CD8-positive, alpha-beta T cell (primary cell): ENCODE measurements at regions of chr20 and their contacts with region 1.

Region 1: GRCh38 chr20:5569021-5569420 is 181.2 kb upstream of the SHLD1 start:
- DNase-seq: peak; percentile 15 to 72 (median 47)
- ATAC-seq: peak; percentile 87
- H3K4me3 ChIP-seq: no peak overlapping the region
- H3K4me3 Mint-ChIP-seq: no peak overlapping the region
- H3K27ac ChIP-seq: no peak overlapping the region
- H3K27ac Mint-ChIP-seq: no peak overlapping the region
- H3K4me1 ChIP-seq: no peaks in the 10 kb centered on the region
- H3K4me1 Mint-ChIP-seq: peaks cover 24% of the 10 kb centered on the region
- H3K27me3 ChIP-seq: no peaks in the 10 kb centered on the region
- H3K27me3 Mint-ChIP-seq: no peaks in the 10 kb centered on the region
- CTCF ChIP-seq: peak; percentile 72

Region 2: GRCh38 chr20:5557123-5557522 is 11.9 kb before region 1 on chr20:
- CTCF ChIA-PET with region 1: interaction called, 11 read pairs
- POLR2A ChIA-PET with region 1: interaction called, 3 read pairs
- intact Hi-C with region 1: no loop called
- DNase-seq: peak; percentile 17 to 66 (median 51)
- ATAC-seq: peak; percentile 74
- H3K4me3 ChIP-seq: no peak overlapping the region
- H3K4me3 Mint-ChIP-seq: no peak overlapping the region
- H3K27ac ChIP-seq: no peak overlapping the region
- H3K27ac Mint-ChIP-seq: peak overlapping the region; percentile 18
- H3K4me1 ChIP-seq: no peaks in the 10 kb centered on the region
- H3K4me1 Mint-ChIP-seq: no peaks in the 10 kb centered on the region
- H3K27me3 ChIP-seq: no peaks in the 10 kb centered on the region
- H3K27me3 Mint-ChIP-seq: no peaks in the 10 kb centered on the region
- CTCF ChIP-seq: no peak

Region 3: GRCh38 chr20:5580936-5581708 is 12.1 kb after region 1 on chr20:
- CTCF ChIA-PET with region 1: interaction called, 20 read pairs
- POLR2A ChIA-PET with region 1: interaction called, 5 read pairs
- intact Hi-C with region 1: no loop called
- DNase-seq: no peak
- ATAC-seq: no peak
- H3K4me3 ChIP-seq: no peak overlapping the region
- H3K4me3 Mint-ChIP-seq: no peak overlapping the region
- H3K27ac ChIP-seq: no peak overlapping the region
- H3K27ac Mint-ChIP-seq: no peak overlapping the region
- H3K4me1 ChIP-seq: no peaks in the 10 kb centered on the region
- H3K4me1 Mint-ChIP-seq: peaks cover 19% of the 10 kb centered on the region
- H3K27me3 ChIP-seq: no peaks in the 10 kb centered on the region
- H3K27me3 Mint-ChIP-seq: no peaks in the 10 kb centered on the region
- CTCF ChIP-seq: no peak

Region 4: DNA sequence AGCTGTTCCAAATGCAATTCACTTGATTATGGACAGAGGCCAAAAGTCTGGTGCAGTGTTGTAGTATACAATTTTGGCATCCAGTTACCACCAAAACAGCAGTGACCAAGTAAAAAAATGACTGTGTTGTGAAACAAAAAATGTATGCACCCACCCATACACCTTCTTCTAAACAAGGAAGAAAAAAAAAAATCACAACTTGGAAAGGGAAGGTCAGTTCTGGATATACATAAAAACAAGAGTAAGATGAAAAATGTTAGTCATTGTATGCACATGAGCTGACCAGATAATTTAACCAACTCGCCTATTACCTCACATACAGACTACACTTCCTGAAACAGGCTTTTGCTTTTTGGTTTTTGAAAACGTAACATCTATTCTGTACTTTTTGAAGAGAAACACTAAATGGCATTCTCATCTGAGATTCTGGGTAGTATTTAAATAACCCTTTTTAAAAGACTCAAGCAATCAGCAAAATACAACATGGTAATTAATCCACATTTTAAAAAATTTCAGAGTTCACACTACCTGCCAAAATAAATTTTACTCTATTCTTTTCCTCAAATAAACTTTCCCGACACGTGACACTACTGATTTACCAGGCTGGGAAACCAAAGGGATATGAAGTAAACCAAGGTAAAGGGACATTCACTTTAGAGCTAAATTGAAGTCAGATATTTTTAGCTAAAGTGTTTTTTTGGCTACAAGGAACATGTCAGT is 39.6 kb after region 1 on chr20:
- CTCF ChIA-PET with region 1: interaction called, 5 read pairs
- POLR2A ChIA-PET with region 1: no interaction called
- intact Hi-C with region 1: loop called in 1 of 2 experiments (anchors 5 kb)
- DNase-seq: peak in 2 of 9 experiments; percentile 27 to 52
- ATAC-seq: no peak
- H3K4me3 ChIP-seq: peak overlapping the region; percentile 59 to 97
- H3K4me3 Mint-ChIP-seq: peak overlapping the region; percentile 98
- H3K27ac ChIP-seq: peak overlapping the region; percentile 94 to 96
- H3K27ac Mint-ChIP-seq: peak overlapping the region; percentile 99
- H3K4me1 ChIP-seq: peaks cover 42% of the 10 kb centered on the region
- H3K4me1 Mint-ChIP-seq: peaks cover 55% of the 10 kb centered on the region
- H3K27me3 ChIP-seq: no peaks in the 10 kb centered on the region
- H3K27me3 Mint-ChIP-seq: no peaks in the 10 kb centered on the region
- CTCF ChIP-seq: no peak

Region 5: GRCh38 chr20:5779071-5779900 is 210.3 kb after region 1 on chr20:
- CTCF ChIA-PET with region 1: interaction called, 20 read pairs
- POLR2A ChIA-PET with region 1: no interaction called
- intact Hi-C with region 1: no loop called
- DNase-seq: no peak
- ATAC-seq: no peak
- H3K4me3 ChIP-seq: no peak overlapping the region
- H3K4me3 Mint-ChIP-seq: no peak overlapping the region
- H3K27ac ChIP-seq: no peak overlapping the region
- H3K27ac Mint-ChIP-seq: peak overlapping the region; percentile 4
- H3K4me1 ChIP-seq: no peaks in the 10 kb centered on the region
- H3K4me1 Mint-ChIP-seq: no peaks in the 10 kb centered on the region
- H3K27me3 ChIP-seq: no peaks in the 10 kb centered on the region
- H3K27me3 Mint-ChIP-seq: no peaks in the 10 kb centered on the region
- CTCF ChIP-seq: no peak

Region 6: GRCh38 chr20:5788385-5788895 is 219.4 kb after region 1 on chr20:
- CTCF ChIA-PET with region 1: interaction called, 131 read pairs
- POLR2A ChIA-PET with region 1: interaction called, 3 read pairs
- intact Hi-C with region 1: loop called (anchors 1 kb)
- DNase-seq: peak; percentile 48 to 91 (median 76)
- ATAC-seq: peak; percentile 99
- H3K4me3 ChIP-seq: no peak overlapping the region
- H3K4me3 Mint-ChIP-seq: no peak overlapping the region
- H3K27ac ChIP-seq: no peak overlapping the region
- H3K27ac Mint-ChIP-seq: no peak overlapping the region
- H3K4me1 ChIP-seq: no peaks in the 10 kb centered on the region
- H3K4me1 Mint-ChIP-seq: peaks cover 5% of the 10 kb centered on the region
- H3K27me3 ChIP-seq: no peaks in the 10 kb centered on the region
- H3K27me3 Mint-ChIP-seq: no peaks in the 10 kb centered on the region
- CTCF ChIP-seq: peak; percentile 95

Region 7: DNA sequence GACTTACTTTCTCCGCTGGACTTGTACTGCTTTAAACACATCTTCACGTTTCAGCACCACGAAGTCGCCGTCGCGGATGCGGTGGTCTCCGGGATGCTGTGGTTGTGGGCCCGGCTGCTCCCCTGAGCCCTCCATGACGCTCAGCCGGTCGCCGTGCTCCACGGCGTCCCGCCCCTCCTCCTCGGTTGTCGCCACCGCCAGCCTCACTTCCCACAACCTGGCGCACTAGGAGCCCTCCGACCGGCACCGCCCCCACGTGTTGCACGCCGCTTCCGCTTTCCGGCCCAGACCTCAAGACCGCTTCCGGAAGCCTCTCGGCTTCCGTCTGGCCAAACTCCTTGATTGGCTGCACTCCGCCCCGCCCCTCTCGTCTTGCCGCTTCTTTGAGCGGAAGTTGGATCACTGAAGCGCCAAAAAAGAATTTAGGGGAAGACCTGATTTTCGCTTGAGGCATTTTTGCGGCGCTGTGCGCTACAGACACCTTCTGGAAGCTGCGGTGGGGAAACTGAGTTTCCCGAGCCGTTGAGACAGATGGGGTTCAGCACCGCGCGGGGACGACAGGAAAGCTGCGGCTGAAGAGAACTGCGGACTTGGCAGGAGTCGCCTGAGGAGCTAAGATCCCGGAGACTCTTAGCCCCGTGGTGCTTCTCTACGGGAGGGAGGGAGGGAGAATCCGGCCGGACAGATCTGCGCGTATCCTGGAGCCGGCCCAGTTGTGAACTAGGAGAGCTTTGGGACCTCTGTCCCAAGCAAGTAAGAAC is 381.4 kb after region 1 on chr20 and contains the starts of genes MCM8 and TRMT6:
- CTCF ChIA-PET with region 1: no interaction called
- POLR2A ChIA-PET with region 1: no interaction called
- intact Hi-C with region 1: loop called in 1 of 2 experiments (anchors 10 kb)
- DNase-seq: peak; percentile 88 to 98 (median 95)
- ATAC-seq: peak; percentile 95
- H3K4me3 ChIP-seq: peak within 1 kb of the TSS; percentile 80 to 82
- H3K4me3 Mint-ChIP-seq: peak within 1 kb of the TSS; percentile 96
- H3K27ac ChIP-seq: peak within 1 kb of the TSS; percentile 62 to 73
- H3K27ac Mint-ChIP-seq: peak within 1 kb of the TSS; percentile 93
- H3K4me1 ChIP-seq: peaks cover 19% of the 10 kb centered on the region
- H3K4me1 Mint-ChIP-seq: peaks cover 48% of the 10 kb centered on the region
- H3K27me3 ChIP-seq: no peaks in the 10 kb centered on the region
- H3K27me3 Mint-ChIP-seq: no peaks in the 10 kb centered on the region
- CTCF ChIP-seq: no peak
- total RNA-seq, gene MCM8: 1.8 to 2.0 TPM
- total RNA-seq, gene TRMT6: 9.6 to 10.4 TPM

Region 8: DNA sequence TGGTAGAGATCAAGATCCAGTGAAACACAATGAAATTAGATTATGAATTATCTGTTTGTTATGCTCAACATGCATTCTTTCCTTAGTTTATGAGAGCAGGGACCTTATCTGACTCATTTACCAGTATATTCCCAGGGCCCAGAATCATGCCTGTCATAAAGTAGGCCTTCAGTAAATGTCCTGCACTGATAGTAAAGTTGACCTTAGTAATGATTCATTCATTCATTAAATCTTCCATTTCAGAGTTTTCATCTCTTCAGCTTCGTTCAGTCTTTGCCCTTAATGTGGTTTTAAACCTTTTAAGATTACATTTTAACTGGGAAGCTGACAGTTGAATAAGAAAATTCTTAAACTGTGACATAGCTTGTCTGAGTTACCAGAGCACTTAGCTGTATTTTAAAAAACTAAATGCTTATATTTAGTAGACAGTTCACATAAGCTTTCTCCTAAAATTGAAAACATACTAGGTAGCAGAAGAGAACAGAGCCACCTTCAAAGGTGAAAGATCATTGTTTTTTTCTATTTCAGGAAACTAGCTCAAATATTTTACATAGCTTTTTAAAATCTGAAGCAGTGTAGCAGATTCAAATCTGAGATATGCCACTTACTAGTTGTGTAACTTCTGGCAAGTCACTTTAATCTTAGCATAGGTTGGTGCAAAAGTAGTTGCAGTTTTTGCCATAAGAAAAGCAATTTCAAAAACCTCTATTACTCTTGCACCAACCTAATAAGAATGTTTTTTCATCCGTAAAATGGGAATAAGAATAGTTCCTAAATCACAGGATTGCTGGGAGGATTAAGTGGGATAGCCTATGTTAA is 422.8 kb after region 1 on chr20:
- CTCF ChIA-PET with region 1: no interaction called
- POLR2A ChIA-PET with region 1: no interaction called
- intact Hi-C with region 1: no loop called
- DNase-seq: no peak
- ATAC-seq: no peak
- H3K4me3 ChIP-seq: no peak overlapping the region
- H3K4me3 Mint-ChIP-seq: no peak overlapping the region
- H3K27ac ChIP-seq: no peak overlapping the region
- H3K27ac Mint-ChIP-seq: no peak overlapping the region
- H3K4me1 ChIP-seq: peaks cover 3% of the 10 kb centered on the region
- H3K4me1 Mint-ChIP-seq: peaks cover 12% of the 10 kb centered on the region
- H3K27me3 ChIP-seq: no peaks in the 10 kb centered on the region
- H3K27me3 Mint-ChIP-seq: no peaks in the 10 kb centered on the region
- CTCF ChIP-seq: no peak

Region 9: GRCh38 chr20:6231551-6231950 is 662.5 kb after region 1 on chr20:
- CTCF ChIA-PET with region 1: no interaction called
- POLR2A ChIA-PET with region 1: no interaction called
- intact Hi-C with region 1: no loop called
- DNase-seq: no peak
- ATAC-seq: no peak
- H3K4me3 ChIP-seq: no peak overlapping the region
- H3K4me3 Mint-ChIP-seq: no peak overlapping the region
- H3K27ac ChIP-seq: no peak overlapping the region
- H3K27ac Mint-ChIP-seq: no peak overlapping the region
- H3K4me1 ChIP-seq: no peaks in the 10 kb centered on the region
- H3K4me1 Mint-ChIP-seq: no peaks in the 10 kb centered on the region
- H3K27me3 ChIP-seq: no peaks in the 10 kb centered on the region
- H3K27me3 Mint-ChIP-seq: peaks cover 5% of the 10 kb centered on the region
- CTCF ChIP-seq: no peak